ENCODE measurements at regions of chr9 and their contacts with region 1.

Region 1: DNA sequence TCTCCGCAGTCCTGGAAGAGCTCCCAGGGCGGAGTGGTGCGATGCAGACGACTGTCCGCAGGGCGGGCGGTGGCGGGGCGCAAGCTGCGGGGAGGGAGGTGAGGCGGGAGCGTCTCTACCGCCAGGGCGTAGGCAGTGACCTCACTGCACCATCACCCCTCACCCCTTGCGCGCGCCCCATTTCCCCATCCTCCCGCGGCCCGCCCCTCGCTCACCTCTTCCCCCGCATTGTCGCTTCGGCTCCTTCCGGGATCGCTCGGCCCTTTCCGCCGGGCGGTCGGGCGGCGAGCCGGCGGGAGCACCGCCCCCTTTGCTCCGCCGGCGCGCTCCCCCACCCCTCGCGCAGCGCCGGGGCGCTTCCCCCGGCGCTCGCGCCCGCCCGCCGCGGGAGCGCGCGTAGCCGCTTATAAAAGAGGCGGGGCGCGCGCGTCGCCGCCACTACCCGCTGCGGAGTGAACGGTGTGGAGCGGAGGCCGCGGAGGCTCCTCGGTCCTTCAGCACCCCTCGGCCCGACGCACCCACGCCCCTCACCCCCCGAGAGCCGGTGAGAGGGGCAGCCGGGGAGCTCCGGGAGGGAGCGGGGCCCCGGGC is at the start of gene SPTAN1:
- DNase-seq: peak; percentile 97
- ATAC-seq: peak; percentile 88
- H3K4me3 ChIP-seq: peak within 1 kb of the TSS; percentile 74 to 90 (median 77)
- H3K4me3 Mint-ChIP-seq: no peak within 1 kb of the TSS
- H3K27ac ChIP-seq: peak within 1 kb of the TSS; percentile 80 to 90
- H3K27ac Mint-ChIP-seq: peak within 1 kb of the TSS; percentile 90
- H3K4me1 ChIP-seq: peaks cover 33 to 34% of the 10 kb centered on the region in 2 donors
- H3K4me1 Mint-ChIP-seq: peaks cover 17% of the 10 kb centered on the region
- H3K27me3 ChIP-seq: no peaks in the 10 kb centered on the region
- H3K27me3 Mint-ChIP-seq: no peaks in the 10 kb centered on the region
- CTCF ChIP-seq: no peak
- total RNA-seq, gene SPTAN1: 351 and 354 TPM in 2 replicates

Region 2: DNA sequence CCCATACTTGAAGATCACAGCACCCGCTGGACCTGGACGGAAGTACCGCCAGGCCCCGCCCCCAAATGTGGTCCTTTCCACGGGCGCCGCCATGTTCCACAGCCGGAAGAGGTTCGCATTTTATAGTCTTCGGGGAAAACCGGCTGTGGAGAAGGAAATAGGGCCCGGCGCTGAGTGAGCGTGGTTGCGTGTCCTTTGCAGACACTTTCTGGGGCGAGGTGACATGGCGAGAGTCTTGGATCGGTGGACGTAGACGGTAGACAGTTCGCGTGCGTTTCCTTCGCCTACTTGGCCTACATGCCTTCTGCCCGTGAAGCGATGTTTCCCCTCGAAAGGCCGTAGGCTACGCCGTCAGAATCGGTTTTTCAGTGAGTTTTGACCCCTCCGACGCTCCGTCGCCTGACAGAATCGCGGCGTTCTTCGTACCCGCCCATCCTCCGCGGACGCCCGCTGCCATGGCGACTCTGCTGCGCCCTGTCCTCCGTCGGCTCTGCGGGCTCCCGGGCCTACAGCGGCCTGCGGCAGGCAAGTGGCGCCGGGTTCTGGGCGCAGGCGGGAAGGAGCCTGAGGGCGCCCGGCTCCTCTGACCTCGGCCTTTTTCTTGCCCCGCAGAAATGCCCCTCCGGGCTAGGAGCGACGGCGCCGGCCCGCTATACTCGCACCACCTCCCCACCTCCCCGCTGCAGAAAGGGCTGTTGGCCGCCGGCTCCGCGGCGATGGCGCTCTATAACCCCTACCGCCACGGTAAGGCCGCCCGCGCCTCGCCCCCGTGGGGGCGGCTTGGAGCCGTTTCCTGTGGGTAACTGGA is 229.6 kb before region 1 on chr9 and contains the starts of genes COQ4 and TRUB2:
- CTCF ChIA-PET with region 1: no interaction called
- POLR2A ChIA-PET with region 1: no interaction called
- intact Hi-C with region 1: loop called (anchors 5 kb)
- DNase-seq: peak; percentile 97
- ATAC-seq: peak; percentile 85
- H3K4me3 ChIP-seq: peak within 1 kb of the TSS; percentile 61 to 95 (median 92)
- H3K4me3 Mint-ChIP-seq: peak within 1 kb of the TSS; percentile 97
- H3K27ac ChIP-seq: peak within 1 kb of the TSS; percentile 75 to 78
- H3K27ac Mint-ChIP-seq: peak within 1 kb of the TSS; percentile 98
- H3K4me1 ChIP-seq: peaks cover 17 to 22% of the 10 kb centered on the region in 2 donors
- H3K4me1 Mint-ChIP-seq: peaks cover 31% of the 10 kb centered on the region
- H3K27me3 ChIP-seq: no peaks in the 10 kb centered on the region
- H3K27me3 Mint-ChIP-seq: no peaks in the 10 kb centered on the region
- CTCF ChIP-seq: no peak
- total RNA-seq, gene COQ4: 54.9 and 57.3 TPM in 2 replicates
- total RNA-seq, gene TRUB2: 21.4 and 21.5 TPM in 2 replicates

Region 3: GRCh38 chr9:128438343-128439109 is 113.7 kb before region 1 on chr9:
- CTCF ChIA-PET with region 1: interaction called, 4 read pairs
- POLR2A ChIA-PET with region 1: no interaction called
- intact Hi-C with region 1: loop called (anchors 5 kb)
- DNase-seq: peak; percentile 84
- ATAC-seq: peak; percentile 94
- H3K4me3 ChIP-seq: no peak overlapping the region
- H3K4me3 Mint-ChIP-seq: no peak overlapping the region
- H3K27ac ChIP-seq: no peak overlapping the region
- H3K27ac Mint-ChIP-seq: no peak overlapping the region
- H3K4me1 ChIP-seq: peaks cover 3 to 8% of the 10 kb centered on the region in 2 donors
- H3K4me1 Mint-ChIP-seq: peaks cover 7% of the 10 kb centered on the region
- H3K27me3 ChIP-seq: no peaks in the 10 kb centered on the region
- H3K27me3 Mint-ChIP-seq: no peaks in the 10 kb centered on the region
- CTCF ChIP-seq: peak; percentile 90

Region 4: DNA sequence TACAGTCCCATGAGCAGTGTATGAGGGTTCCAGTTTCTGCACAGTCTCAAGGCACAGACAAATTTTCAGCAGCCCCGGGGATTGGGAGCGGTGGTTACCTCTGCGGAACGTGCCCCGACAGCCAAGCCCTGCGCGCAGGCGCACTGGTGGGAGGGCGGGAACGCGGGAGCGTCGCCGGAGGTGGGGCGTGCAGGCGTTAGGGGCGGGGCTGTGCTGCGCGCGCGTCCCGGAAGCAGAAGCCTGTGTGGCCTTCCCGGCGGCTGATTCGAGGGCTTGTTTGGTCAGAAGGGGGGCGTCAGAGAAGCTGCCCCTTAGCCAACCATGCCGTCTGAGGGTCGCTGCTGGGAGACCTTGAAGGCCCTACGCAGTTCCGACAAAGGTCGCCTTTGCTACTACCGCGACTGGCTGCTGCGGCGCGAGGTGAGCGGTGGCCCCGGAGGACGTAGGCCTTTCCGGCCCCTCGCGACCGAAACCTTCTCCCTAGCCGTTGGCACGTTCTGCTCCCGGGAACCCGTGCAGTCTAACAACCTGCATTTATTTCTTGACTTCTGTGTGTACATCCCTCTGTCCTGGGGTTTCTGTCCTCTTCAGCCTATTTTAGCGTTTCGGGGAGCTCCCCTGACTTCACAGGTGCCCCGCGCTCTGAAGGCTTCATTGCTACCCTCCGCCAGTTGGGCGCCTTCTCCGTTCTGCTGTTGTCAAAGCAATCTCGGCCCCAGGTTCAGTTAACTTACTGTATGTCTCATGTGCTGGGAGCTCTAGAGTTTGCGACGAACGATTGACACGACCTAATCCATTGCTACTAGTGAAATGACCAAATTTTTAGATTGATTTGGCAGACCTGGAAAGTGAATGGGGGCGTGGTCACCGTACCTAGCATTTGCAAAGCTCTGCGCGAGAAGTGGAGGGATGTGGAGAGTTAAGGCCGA is 47.5 kb before region 1 on chr9 and contains the start of gene GLE1:
- CTCF ChIA-PET with region 1: no interaction called
- POLR2A ChIA-PET with region 1: interaction called, 4 read pairs
- intact Hi-C with region 1: loop called (anchors 1 kb)
- DNase-seq: peak; percentile 97
- ATAC-seq: peak; percentile 93
- H3K4me3 ChIP-seq: peak within 1 kb of the TSS; percentile 85 to 97 (median 87)
- H3K4me3 Mint-ChIP-seq: peak within 1 kb of the TSS; percentile 100
- H3K27ac ChIP-seq: peak within 1 kb of the TSS; percentile 69 to 80
- H3K27ac Mint-ChIP-seq: peak within 1 kb of the TSS; percentile 99
- H3K4me1 ChIP-seq: peaks cover 8 to 13% of the 10 kb centered on the region in 2 donors
- H3K4me1 Mint-ChIP-seq: peaks cover 23% of the 10 kb centered on the region
- H3K27me3 ChIP-seq: no peaks in the 10 kb centered on the region
- H3K27me3 Mint-ChIP-seq: no peaks in the 10 kb centered on the region
- CTCF ChIP-seq: no peak
- total RNA-seq, gene GLE1: 30.3 and 31.9 TPM in 2 replicates

Region 5: GRCh38 chr9:128688512-128689292 is 136.5 kb after region 1 on chr9 and contains the start of gene SET:
- CTCF ChIA-PET with region 1: no interaction called
- POLR2A ChIA-PET with region 1: no interaction called
- intact Hi-C with region 1: loop called (anchors 2 kb)
- DNase-seq: peak; percentile 97
- ATAC-seq: peak; percentile 81
- H3K4me3 ChIP-seq: peak within 1 kb of the TSS; percentile 57 to 81 (median 70)
- H3K4me3 Mint-ChIP-seq: peak within 1 kb of the TSS; percentile 89
- H3K27ac ChIP-seq: peak within 1 kb of the TSS; percentile 89 to 91
- H3K27ac Mint-ChIP-seq: peak within 1 kb of the TSS; percentile 95
- H3K4me1 ChIP-seq: peaks cover 47 to 57% of the 10 kb centered on the region in 2 donors
- H3K4me1 Mint-ChIP-seq: peaks cover 60% of the 10 kb centered on the region
- H3K27me3 ChIP-seq: no peaks in the 10 kb centered on the region
- H3K27me3 Mint-ChIP-seq: no peaks in the 10 kb centered on the region
- CTCF ChIP-seq: no peak
- total RNA-seq, gene SET: 306 and 309 TPM in 2 replicates

Region 6: GRCh38 chr9:128771745-128772519 is 219.7 kb after region 1 on chr9 and contains the start of gene ZER1:
- CTCF ChIA-PET with region 1: no interaction called
- POLR2A ChIA-PET with region 1: no interaction called
- intact Hi-C with region 1: loop called (anchors 5 kb)
- DNase-seq: peak; percentile 95
- ATAC-seq: peak; percentile 93
- H3K4me3 ChIP-seq: peak within 1 kb of the TSS; percentile 69 to 96 (median 77)
- H3K4me3 Mint-ChIP-seq: peak within 1 kb of the TSS; percentile 97
- H3K27ac ChIP-seq: peak within 1 kb of the TSS; percentile 86 to 93
- H3K27ac Mint-ChIP-seq: peak within 1 kb of the TSS; percentile 96
- H3K4me1 ChIP-seq: peaks cover 9 to 19% of the 10 kb centered on the region in 2 donors
- H3K4me1 Mint-ChIP-seq: peaks cover 25% of the 10 kb centered on the region
- H3K27me3 ChIP-seq: no peaks in the 10 kb centered on the region
- H3K27me3 Mint-ChIP-seq: no peaks in the 10 kb centered on the region
- CTCF ChIP-seq: no peak
- total RNA-seq, gene ZER1: 42.2 and 44.0 TPM in 2 replicates

Region 7: DNA sequence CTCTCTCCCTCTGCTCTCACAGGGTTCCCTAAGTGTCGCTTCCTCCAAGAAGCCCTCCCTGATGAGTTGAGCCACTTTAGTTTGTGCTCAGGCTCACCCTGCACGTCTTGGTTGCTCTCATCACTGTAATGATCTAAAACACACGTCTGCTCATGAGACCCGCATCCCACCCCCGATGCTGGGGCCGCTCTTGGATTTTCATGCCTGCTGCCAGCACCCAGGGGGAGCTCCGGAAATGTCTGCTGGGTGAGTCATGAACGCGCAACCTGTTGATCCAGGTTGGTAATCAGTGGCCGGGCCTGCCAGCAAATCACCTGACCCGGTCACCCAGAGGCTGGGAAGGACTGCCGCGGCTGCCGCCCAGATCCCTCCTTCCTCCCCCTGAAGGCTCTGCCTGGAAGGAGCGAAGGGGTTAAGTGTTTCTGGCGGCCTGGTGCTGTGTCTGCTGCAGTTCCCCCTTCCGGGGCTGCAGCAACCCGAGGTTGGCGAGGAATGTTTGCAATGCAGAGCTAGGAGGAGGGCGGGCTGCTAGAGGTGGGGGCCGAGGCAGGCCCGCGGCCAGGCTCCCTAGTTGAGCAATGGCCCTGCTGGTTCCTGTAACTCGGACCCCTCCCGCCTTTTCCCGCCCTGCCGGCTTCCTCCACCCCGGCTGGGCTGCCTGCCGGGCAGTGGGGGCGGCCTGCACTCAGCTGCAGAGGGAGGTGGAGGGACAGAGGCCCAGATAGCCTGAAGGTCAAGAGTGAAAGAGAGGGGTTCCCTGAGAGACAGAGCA is 781.9 kb after region 1 on chr9:
- CTCF ChIA-PET with region 1: no interaction called
- POLR2A ChIA-PET with region 1: no interaction called
- intact Hi-C with region 1: no loop called
- DNase-seq: no peak
- ATAC-seq: no peak
- H3K4me3 ChIP-seq: no peak overlapping the region
- H3K4me3 Mint-ChIP-seq: peak overlapping the region; percentile 32
- H3K27ac ChIP-seq: no peak overlapping the region
- H3K27ac Mint-ChIP-seq: no peak overlapping the region
- H3K4me1 ChIP-seq: peaks cover 26 to 33% of the 10 kb centered on the region in 2 donors
- H3K4me1 Mint-ChIP-seq: peaks cover 23% of the 10 kb centered on the region
- H3K27me3 ChIP-seq: peaks cover 0 to 42% (median 16%) of the 10 kb centered on the region in 4 experiments
- H3K27me3 Mint-ChIP-seq: peaks cover 41% of the 10 kb centered on the region
- CTCF ChIP-seq: no peak

Measured in B cell (primary cell).